ENCODE measurements at regions of chr10 and their contacts with region 1.

Region 1: DNA sequence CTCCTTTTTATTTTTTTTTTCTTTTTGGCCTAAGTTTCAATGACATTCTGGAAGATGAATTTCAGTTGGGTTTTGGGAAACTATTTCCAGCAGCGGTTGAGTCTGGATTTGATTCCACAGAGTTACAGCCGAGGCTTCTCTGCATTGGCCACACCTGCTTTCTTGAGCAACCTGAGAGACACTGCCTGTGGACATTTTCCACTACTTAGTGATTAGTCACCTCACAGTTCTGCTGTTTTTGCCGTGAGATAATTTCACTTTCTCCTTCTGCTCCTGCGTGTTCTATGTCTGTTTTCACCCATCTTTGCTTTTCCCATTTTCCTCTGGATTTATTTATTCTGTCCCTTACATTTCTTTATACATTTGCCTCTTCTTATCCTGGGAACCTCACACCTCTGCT is 243.0 kb downstream of the BICC1 start:
- DNase-seq: peak in 1 of 2 donors; percentile 16
- ATAC-seq: peak; percentile 70 to 83 (median 76)
- H3K4me3 ChIP-seq: peak overlapping the region; percentile 60
- H3K27ac ChIP-seq: peak overlapping the region; percentile 81
- H3K4me1 ChIP-seq: peaks cover 28% of the 10 kb centered on the region
- H3K27me3 ChIP-seq: no peaks in the 10 kb centered on the region
- CTCF ChIP-seq: no peak

Region 2: DNA sequence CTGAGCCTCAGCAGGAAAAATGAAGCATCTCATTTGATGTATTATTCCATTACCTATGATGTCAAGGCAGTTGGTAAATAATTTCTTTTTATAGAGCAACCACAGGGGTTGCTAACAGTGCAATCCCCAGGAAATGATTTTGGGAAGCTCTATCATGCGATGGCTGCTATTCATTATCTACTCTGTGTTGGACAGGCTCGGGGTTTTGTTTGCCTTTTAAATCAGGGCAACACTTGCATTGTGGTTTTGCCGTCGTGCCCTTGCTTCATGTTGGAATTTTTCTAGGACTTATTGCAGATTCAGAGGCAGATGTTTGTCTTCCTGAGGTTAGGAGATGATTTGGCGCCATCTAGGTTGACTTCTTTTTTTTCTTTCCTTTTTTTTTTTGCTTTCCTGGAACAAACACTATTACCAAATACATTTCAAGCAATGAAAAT is 114.6 kb before region 1 on chr10:
- intact Hi-C with region 1: loop called in 1 of 2 experiments (anchors 10 kb)
- DNase-seq: no peak
- ATAC-seq: peak; percentile 37 to 74 (median 56)
- H3K4me3 ChIP-seq: peak overlapping the region; percentile 6
- H3K27ac ChIP-seq: peak overlapping the region; percentile 53
- H3K4me1 ChIP-seq: peaks cover 6% of the 10 kb centered on the region
- H3K27me3 ChIP-seq: no peaks in the 10 kb centered on the region
- CTCF ChIP-seq: no peak

Measured in psoas muscle (tissue), 8 donors.